Activated B cell treated with CpG ODN at 0.5 μM for 24 hours (primary cell): ENCODE measurements at regions of chr17 and their contacts with region 1.

Region 1: GRCh38 chr17:38868817-38869525 is 887 bp upstream of the LASP1 start:
- DNase-seq: peak; percentile 84
- ATAC-seq: peak; percentile 53
- H3K4me3 Mint-ChIP-seq: peak overlapping the region; percentile 99
- H3K27ac Mint-ChIP-seq: peak overlapping the region; percentile 96
- H3K4me1 Mint-ChIP-seq: peaks cover 72% of the 10 kb centered on the region
- H3K27me3 Mint-ChIP-seq: peaks cover 2% of the 10 kb centered on the region
- CTCF ChIP-seq: no peak

Region 2: GRCh38 chr17:38752119-38752929 is 116.6 kb before region 1 on chr17 and contains the start of gene PSMB3:
- CTCF ChIA-PET with region 1: no interaction called
- POLR2A ChIA-PET with region 1: interaction called, 27 read pairs
- intact Hi-C with region 1: loop called (anchors 1 kb)
- DNase-seq: peak; percentile 87
- ATAC-seq: peak; percentile 89
- H3K4me3 Mint-ChIP-seq: peak within 1 kb of the TSS; percentile 98
- H3K27ac Mint-ChIP-seq: peak within 1 kb of the TSS; percentile 93
- H3K4me1 Mint-ChIP-seq: peaks cover 54% of the 10 kb centered on the region
- H3K27me3 Mint-ChIP-seq: peaks cover 25% of the 10 kb centered on the region
- CTCF ChIP-seq: no peak
- total RNA-seq, gene PSMB3: 234 and 250 TPM in 2 replicates

Region 3: DNA sequence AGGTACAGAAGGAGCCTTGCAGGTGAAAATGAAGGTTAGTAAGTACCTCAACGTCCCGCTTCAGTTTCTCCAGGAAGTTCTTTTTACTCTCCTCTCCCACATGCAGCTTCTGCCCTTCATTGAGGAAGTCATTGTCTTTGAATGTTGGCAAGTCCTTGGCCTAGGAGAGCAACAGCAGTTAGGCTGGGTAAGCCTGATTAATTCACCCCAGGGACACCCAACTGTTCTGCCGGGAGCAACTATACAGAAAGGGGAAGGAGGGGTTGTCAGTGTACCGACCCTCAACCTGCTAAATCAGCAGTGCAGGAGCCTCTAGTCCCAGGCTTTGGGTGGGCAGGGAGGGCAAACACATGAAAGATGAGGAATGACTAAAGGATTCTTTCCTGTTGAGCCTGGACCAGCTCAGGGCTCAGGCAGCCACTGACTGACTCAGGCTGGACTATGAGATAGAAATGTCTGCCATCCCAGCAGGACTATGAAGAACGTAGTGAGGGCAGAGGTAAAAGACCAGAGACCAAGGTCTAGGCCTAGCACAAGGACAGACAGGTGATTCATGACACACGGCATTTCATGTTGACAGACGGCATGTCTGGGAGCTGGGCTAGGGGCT is 91.2 kb before region 1 on chr17:
- CTCF ChIA-PET with region 1: no interaction called
- POLR2A ChIA-PET with region 1: no interaction called
- intact Hi-C with region 1: no loop called
- DNase-seq: no peak
- ATAC-seq: no peak
- H3K4me3 Mint-ChIP-seq: no peak overlapping the region
- H3K27ac Mint-ChIP-seq: no peak overlapping the region
- H3K4me1 Mint-ChIP-seq: no peaks in the 10 kb centered on the region
- H3K27me3 Mint-ChIP-seq: no peaks in the 10 kb centered on the region
- CTCF ChIP-seq: no peak

Region 4: DNA sequence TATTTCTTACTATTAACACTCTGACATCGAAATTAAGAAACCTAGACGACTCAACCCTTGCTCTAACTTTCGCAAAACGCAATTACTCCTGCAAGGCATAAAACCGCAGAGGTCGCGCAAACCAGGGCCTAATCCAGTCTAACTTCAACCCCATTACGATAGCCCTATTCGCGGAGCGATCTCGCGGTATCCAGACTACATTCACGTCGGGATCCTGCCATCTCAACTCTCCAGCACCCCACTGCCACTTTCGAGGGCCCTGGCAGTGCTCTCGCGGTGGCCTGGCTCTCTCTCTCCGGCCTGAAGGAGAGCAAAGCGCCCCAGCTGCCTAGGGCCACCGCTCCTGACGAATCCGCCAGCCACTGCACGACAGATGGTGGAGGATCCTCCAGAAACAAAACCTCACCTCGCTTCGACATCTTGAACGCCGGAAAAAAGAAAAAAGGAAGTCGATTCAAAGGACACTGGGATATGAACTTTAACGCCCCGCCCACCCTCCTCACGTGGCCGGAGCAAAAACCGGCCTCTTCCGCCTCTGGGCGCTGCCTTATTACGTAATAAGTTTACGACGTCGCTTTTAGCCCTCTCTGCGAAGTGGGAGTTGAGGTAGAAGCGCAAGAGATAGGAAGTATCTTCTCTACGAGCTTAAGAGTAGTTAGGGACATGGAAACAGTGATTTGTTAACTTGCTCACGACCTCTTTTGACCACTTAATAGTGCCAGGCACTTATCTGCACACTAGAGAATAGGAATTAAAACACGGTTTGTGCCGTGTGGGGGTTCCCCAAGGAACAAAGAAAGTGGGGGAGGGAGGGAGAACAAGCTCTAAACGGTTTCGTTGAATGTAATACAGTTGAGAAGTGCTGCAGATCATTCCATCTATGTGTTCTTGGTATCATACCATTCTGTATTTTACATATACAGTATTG is 15.4 kb before region 1 on chr17 and contains the start of gene RPL23:
- CTCF ChIA-PET with region 1: interaction called, 28 read pairs
- POLR2A ChIA-PET with region 1: interaction called, 370 read pairs
- intact Hi-C with region 1: loop called (anchors 1 kb)
- DNase-seq: peak; percentile 79
- ATAC-seq: peak; percentile 86
- H3K4me3 Mint-ChIP-seq: peak within 1 kb of the TSS; percentile 99
- H3K27ac Mint-ChIP-seq: peak within 1 kb of the TSS; percentile 100
- H3K4me1 Mint-ChIP-seq: peaks cover 43% of the 10 kb centered on the region
- H3K27me3 Mint-ChIP-seq: no peaks in the 10 kb centered on the region
- CTCF ChIP-seq: no peak
- total RNA-seq, gene RPL23: 2,652 and 3,293 TPM in 2 replicates

Region 5: GRCh38 chr17:38912221-38912813 is 43.3 kb after region 1 on chr17:
- CTCF ChIA-PET with region 1: no interaction called
- POLR2A ChIA-PET with region 1: interaction called, 12 read pairs
- intact Hi-C with region 1: no loop called
- DNase-seq: no peak
- ATAC-seq: no peak
- H3K4me3 Mint-ChIP-seq: no peak overlapping the region
- H3K27ac Mint-ChIP-seq: no peak overlapping the region
- H3K4me1 Mint-ChIP-seq: peaks cover 14% of the 10 kb centered on the region
- H3K27me3 Mint-ChIP-seq: no peaks in the 10 kb centered on the region
- CTCF ChIP-seq: no peak

Region 6: DNA sequence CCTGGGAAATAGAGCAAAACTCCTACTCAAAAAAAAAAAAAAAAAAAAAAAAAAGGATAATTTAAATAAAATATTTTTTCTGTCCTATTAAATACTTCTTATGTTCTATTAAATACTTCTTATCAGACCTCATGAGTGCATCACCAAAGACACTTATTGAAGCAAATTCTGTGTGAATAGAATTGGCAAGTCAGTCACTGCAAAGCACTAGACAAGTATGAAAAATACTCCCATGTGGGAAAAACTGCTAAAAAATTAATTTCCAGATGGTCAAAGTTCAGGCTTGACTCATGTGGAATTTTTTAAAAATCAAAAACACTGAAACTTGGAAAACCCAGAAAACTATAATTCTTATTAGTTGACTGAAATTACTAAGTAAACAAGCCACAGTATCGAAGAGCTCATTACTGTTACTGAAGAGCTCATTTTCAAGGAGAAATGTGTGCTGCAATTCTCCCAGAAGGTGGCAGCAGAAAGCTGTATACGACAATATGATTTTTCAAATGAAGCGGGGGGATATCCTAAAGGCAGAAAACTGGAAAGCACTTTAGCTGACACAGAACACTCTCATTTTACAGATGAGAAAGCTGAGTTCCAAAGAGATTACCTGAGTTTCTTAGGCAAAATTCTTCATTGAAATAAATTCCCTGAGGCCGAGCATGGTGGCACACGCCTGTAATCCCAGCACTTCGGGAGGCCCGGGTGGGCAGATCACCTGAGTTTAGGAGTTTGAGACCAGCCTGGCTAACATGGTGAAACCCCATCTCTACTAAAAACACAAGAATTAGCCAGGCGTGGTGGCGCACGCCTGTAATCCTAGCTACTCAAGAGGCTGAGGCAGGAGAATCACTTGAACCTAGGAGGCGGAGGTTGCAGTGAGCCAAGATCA is 114.1 kb after region 1 on chr17:
- CTCF ChIA-PET with region 1: interaction called, 18 read pairs
- POLR2A ChIA-PET with region 1: interaction called, 5 read pairs
- intact Hi-C with region 1: loop called (anchors 2 kb)
- DNase-seq: no peak
- ATAC-seq: peak; percentile 54
- H3K4me3 Mint-ChIP-seq: no peak overlapping the region
- H3K27ac Mint-ChIP-seq: no peak overlapping the region
- H3K4me1 Mint-ChIP-seq: no peaks in the 10 kb centered on the region
- H3K27me3 Mint-ChIP-seq: peaks cover 10% of the 10 kb centered on the region
- CTCF ChIP-seq: peak; percentile 47

Region 7: DNA sequence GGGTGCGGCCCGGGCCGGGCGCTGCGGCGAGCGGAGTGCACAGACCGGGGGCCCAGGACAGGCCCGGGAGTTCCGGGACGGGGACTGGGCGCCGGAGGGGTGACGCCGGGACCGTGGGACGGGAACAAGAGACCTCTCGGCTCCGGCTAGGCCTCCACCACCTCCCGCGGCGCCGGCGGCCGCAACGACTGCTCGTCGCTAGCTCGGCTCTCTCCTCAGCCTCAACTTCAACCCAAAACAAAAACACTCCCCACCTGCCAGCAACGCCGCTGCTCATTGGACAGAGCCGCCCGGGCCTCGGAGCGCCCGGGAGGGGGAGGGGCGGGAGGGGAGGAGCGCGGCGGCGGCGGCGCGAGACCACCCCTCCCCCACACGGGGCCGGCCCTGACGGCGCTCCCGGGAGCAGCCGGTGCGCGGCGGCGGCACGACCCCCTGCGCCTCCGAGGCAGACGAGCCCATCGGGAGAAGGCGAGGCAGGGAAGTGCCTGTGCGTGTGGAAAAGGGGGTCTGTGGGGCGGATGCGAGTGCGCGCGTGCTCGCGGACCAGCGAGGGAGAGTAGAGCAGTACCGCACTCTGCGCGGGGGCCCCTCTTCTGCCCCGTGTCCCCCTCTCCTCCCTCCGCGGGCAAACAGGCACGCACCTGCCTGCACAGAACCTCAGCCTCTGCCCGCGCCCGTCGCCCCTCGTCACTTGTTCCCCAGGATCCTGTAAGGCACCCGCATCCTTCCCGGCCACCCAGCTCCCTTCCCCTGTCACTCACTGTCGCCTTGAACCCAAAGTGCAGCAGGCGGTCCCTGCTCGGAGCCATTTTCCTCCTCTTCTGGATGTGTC is 532.7 kb after region 1 on chr17 and contains the start of gene FBXL20:
- CTCF ChIA-PET with region 1: no interaction called
- POLR2A ChIA-PET with region 1: interaction called, 4 read pairs
- intact Hi-C with region 1: loop called (anchors 5 kb)
- DNase-seq: peak; percentile 85
- ATAC-seq: peak; percentile 76
- H3K4me3 Mint-ChIP-seq: peak within 1 kb of the TSS; percentile 98
- H3K27ac Mint-ChIP-seq: peak within 1 kb of the TSS; percentile 96
- H3K4me1 Mint-ChIP-seq: peaks cover 20% of the 10 kb centered on the region
- H3K27me3 Mint-ChIP-seq: no peaks in the 10 kb centered on the region
- CTCF ChIP-seq: no peak
- total RNA-seq, gene FBXL20: 14.1 and 14.4 TPM in 2 replicates